Activated CD4-positive, alpha-beta memory T cell treated with anti-CD3 and anti-CD28 coated beads for 36 hours (primary cell): ENCODE measurements at regions of chr10 and their contacts with region 1.

Region 1: DNA sequence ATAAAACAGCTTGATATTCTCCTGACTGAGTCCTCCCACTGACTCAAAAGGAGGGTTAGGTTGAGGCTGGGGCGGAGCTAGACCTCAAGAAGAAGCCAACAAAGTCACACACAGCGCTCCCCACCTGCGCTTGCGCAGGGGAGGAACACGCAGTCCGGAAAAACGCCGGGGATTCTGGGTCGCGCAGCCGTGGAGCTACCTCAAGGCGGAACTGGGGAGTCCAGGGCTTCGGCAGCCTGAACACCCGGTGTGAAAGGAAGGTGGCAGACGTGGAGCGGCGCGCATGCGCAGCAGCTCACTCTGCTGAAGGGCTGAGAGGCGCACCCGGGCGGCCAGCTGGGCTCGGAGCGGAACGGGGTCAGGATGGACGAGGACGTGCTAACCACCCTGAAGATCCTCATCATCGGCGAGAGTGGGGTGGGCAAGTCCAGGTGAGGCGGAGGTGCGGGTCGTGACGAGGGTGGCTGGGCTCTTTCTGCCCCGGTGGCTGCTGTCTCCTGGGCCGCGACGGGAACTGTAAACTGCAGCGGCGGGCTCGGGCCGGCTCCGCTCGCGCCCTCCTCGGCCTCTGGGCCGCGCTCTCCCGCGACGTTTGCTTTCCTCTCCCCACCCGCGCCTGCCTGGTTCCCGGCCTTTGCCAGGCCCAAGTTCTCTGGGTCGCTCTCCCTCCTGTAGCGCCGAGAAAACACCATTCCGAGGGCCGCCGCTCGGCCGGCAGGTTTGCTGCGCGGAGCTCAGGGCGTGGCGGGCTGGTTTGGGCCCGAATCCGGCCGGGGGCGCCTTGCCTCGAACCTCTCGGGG is at the start of gene RAB18:
- DNase-seq: peak; percentile 99
- H3K4me3 Mint-ChIP-seq: peak within 1 kb of the TSS; percentile 100
- H3K27ac Mint-ChIP-seq: peak within 1 kb of the TSS; percentile 96
- H3K4me1 Mint-ChIP-seq: peaks cover 51% of the 10 kb centered on the region
- H3K27me3 Mint-ChIP-seq: no peaks in the 10 kb centered on the region
- total RNA-seq, gene RAB18: 51.7 to 54.0 TPM

Region 2: GRCh38 chr10:27155066-27155754 is 349.0 kb before region 1 on chr10 and contains the start of gene MASTL:
- CTCF ChIA-PET with region 1: no interaction called
- POLR2A ChIA-PET with region 1: interaction called, 5 read pairs
- intact Hi-C with region 1: loop called (anchors 1 kb)
- DNase-seq: peak; percentile 96
- H3K4me3 Mint-ChIP-seq: peak within 1 kb of the TSS; percentile 97
- H3K27ac Mint-ChIP-seq: peak within 1 kb of the TSS; percentile 100
- H3K4me1 Mint-ChIP-seq: peaks cover 39% of the 10 kb centered on the region
- H3K27me3 Mint-ChIP-seq: no peaks in the 10 kb centered on the region
- total RNA-seq, gene MASTL: 44.2 to 50.4 TPM

Region 3: GRCh38 chr10:27464993-27465392 is 39.2 kb before region 1 on chr10:
- CTCF ChIA-PET with region 1: no interaction called
- POLR2A ChIA-PET with region 1: no interaction called
- intact Hi-C with region 1: loop called (anchors 5 kb)
- DNase-seq: no peak
- H3K4me3 Mint-ChIP-seq: no peak overlapping the region
- H3K27ac Mint-ChIP-seq: peak overlapping the region; percentile 59
- H3K4me1 Mint-ChIP-seq: peaks cover 28% of the 10 kb centered on the region
- H3K27me3 Mint-ChIP-seq: no peaks in the 10 kb centered on the region

Region 4: GRCh38 chr10:27534161-27534700 is 30.0 kb after region 1 on chr10:
- CTCF ChIA-PET with region 1: interaction called, 4 read pairs
- POLR2A ChIA-PET with region 1: interaction called, 4 read pairs
- intact Hi-C with region 1: loop called (anchors 2 kb)
- DNase-seq: no peak
- H3K4me3 Mint-ChIP-seq: no peak overlapping the region
- H3K27ac Mint-ChIP-seq: no peak overlapping the region
- H3K4me1 Mint-ChIP-seq: peaks cover 25% of the 10 kb centered on the region
- H3K27me3 Mint-ChIP-seq: no peaks in the 10 kb centered on the region

Region 5: DNA sequence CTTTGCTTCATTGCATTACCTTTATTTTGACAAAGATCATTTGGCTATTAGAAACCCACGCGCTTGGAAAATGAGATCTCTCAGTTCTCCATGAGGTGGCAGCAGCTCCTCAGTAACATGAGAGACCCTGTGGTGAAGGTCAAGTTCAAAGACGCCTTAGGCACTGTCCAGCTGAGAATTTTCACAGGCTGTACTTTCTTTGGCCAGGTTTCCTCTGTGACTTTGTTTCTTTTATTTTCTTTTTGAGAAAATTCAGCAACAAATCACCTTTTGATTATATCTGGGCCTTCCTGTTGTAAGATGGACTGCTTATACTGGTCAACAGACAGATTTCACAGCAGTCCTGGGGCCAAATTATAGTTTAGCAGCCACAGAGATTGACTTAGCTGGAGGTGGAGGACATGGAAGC is 54.4 kb after region 1 on chr10:
- CTCF ChIA-PET with region 1: no interaction called
- POLR2A ChIA-PET with region 1: no interaction called
- intact Hi-C with region 1: no loop called
- DNase-seq: peak; percentile 42
- H3K4me3 Mint-ChIP-seq: no peak overlapping the region
- H3K27ac Mint-ChIP-seq: no peak overlapping the region
- H3K4me1 Mint-ChIP-seq: no peaks in the 10 kb centered on the region
- H3K27me3 Mint-ChIP-seq: no peaks in the 10 kb centered on the region

Region 6: DNA sequence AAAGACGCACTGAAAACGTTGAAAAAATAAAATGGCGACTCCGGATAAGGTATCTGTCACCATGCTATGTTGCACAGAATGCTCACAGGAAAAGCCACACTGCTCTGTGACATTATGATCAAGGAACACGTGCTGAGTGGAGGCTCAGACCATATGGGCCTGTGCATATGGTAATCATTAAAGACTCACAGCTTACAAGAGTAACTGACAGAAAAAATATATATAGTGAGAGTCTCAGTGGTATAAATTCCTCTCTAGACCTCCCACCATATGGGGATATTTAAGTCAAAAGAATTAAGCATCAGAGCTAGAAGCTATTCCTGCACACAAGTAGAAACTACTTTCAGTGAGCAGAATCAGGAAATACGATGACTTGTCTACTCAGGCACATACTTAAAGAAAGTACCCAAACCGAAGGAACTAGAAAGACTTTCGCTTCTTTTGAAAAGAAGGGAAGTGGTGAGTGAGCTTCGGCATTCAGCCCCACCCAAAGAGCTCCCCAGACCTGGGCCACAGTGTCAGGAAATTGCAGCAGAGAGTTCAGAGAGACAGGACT is 863.8 kb after region 1 on chr10:
- CTCF ChIA-PET with region 1: no interaction called
- POLR2A ChIA-PET with region 1: no interaction called
- intact Hi-C with region 1: loop called (anchors 1 kb)
- DNase-seq: peak; percentile 76
- H3K4me3 Mint-ChIP-seq: peak overlapping the region; percentile 45
- H3K27ac Mint-ChIP-seq: peak overlapping the region; percentile 86
- H3K4me1 Mint-ChIP-seq: peaks cover 45% of the 10 kb centered on the region
- H3K27me3 Mint-ChIP-seq: no peaks in the 10 kb centered on the region